Heart left ventricle (tissue), 16 donors: ENCODE measurements at regions of chr14 and their contacts with region 1.

Region 1: GRCh38 chr14:56659964-56660551 is 80.5 kb downstream of the TMEM260 start:
- DNase-seq: no peak
- ATAC-seq: peak in 1 of 4 donors; percentile 42
- H3K4me3 ChIP-seq: no peak overlapping the region
- H3K27ac ChIP-seq: no peak overlapping the region
- H3K4me1 ChIP-seq: peaks cover 0 to 5% (median 0%) of the 10 kb centered on the region in 12 donors
- H3K27me3 ChIP-seq: peaks cover 0 to 4% (median 0%) of the 10 kb centered on the region in 9 donors
- CTCF ChIP-seq: peak in 10 of 12 donors; percentile 17 to 52 (median 40)
- POLR2A ChIP-seq: no peak

Region 2: DNA sequence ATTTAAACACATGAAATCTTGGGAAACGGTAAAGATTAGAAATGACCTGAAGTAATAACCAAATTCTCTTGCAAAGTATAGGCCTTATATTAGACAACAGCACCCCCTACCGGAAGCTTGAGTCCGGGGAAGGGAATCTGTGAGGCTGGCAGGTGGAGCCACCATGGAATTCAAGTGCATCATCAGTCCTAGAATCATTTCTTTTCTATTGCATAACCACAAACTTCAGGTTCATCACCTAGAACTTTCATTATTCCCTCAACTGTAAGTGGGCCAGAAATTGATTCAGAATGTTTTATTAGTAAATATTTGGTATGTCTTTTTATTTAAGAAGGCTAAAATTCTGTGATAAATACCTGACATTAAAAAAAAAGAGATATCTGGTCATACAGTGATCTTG is 657.3 kb after region 1 on chr14:
- intact Hi-C with region 1: loop called in 1 of 10 experiments (anchors 10 kb)
- DNase-seq: peak; percentile 45 to 59 (median 54)
- ATAC-seq: peak in 2 of 4 donors; percentile 60 to 62
- H3K4me3 ChIP-seq: no peak overlapping the region
- H3K27ac ChIP-seq: no peak overlapping the region
- H3K4me1 ChIP-seq: no peaks in the 10 kb centered on the region
- H3K27me3 ChIP-seq: peaks cover 0 to 19% (median 0%) of the 10 kb centered on the region in 9 donors
- CTCF ChIP-seq: peak; percentile 71 to 91 (median 84)
- POLR2A ChIP-seq: no peak